HepG2 (cell line): ENCODE measurements at regions of chr14 and their contacts with region 1.

Region 1: DNA sequence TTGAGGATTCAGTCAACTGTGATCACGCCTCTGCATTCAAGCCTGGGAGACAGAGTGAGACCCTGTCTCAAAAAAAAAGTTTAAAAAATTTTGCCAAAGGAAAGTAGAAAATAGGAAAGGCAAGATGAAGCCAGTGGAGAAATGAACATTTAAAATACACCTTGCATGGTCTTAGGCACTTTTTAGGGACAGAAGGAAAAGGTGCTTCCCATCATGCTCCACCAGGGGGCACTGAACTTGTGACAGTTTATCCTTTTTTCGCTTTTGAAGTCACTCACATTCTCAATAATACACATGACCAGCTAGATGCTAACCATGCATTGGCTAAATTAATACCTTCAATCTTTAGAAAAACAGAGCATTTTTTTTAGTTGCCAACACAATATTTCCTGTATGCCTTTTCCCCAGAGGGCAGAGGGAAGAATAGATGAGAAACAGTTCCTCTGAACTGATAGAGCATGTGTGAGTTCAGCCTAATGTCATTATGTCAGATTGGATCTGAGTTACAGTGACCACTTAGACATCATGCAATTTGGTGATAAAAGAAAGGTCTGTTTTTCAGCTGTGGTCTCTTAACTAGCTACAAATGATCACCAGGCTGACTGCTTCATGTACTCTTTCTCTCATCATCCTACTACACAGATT is 221.8 kb upstream of the SSTR1 start:
- DNase-seq: peak; percentile 77
- ATAC-seq: peak; percentile 93
- H3K4me3 ChIP-seq: no peak overlapping the region
- H3K27ac ChIP-seq: no peak overlapping the region
- H3K4me1 ChIP-seq: no peaks in the 10 kb centered on the region
- H3K27me3 ChIP-seq: no peaks in the 10 kb centered on the region; a peak in 1 of 5 replicates
- CTCF ChIP-seq: peak; percentile 89
- EP300 ChIP-seq: no peak
- POLR2A ChIP-seq: no peak
- RAD21 ChIP-seq: no peak

Region 2: DNA sequence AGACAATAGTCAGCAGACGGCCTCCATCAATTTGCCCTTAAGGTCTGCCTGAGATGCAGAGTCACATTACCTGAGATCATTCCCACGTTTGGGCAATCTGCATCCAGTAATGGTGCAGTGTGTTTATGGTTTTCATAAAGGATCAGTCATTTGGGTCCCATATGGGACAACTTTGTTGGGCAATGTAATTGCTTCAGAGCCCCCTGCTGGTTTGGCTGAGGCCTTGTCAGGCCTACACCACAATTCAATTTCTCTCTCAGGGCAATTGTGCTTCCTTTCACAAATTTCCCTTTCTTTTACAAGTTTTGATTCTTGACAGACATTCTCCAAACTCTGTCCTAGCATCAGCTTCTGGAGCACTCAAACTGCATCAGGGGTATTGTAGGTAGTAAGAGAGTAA is 30.5 kb after region 1 on chr14:
- CTCF ChIA-PET with region 1: no interaction called
- POLR2A ChIA-PET with region 1: no interaction called
- in situ Hi-C with region 1: no loop called
- intact Hi-C with region 1: loop called (anchors 2 kb)
- DNase-seq: peak; percentile 41
- ATAC-seq: peak; percentile 95
- H3K4me3 ChIP-seq: no peak overlapping the region
- H3K27ac ChIP-seq: no peak overlapping the region
- H3K4me1 ChIP-seq: no peaks in the 10 kb centered on the region
- H3K27me3 ChIP-seq: no peaks in the 10 kb centered on the region
- CTCF ChIP-seq: peak; percentile 55
- EP300 ChIP-seq: no peak
- POLR2A ChIP-seq: no peak
- RAD21 ChIP-seq: no peak

Region 3: GRCh38 chr14:38065106-38065762 is 79.3 kb after region 1 on chr14:
- CTCF ChIA-PET with region 1: no interaction called
- POLR2A ChIA-PET with region 1: no interaction called
- in situ Hi-C with region 1: no loop called
- intact Hi-C with region 1: no loop called
- DNase-seq: no peak
- ATAC-seq: peak; percentile 77
- H3K4me3 ChIP-seq: no peak overlapping the region
- H3K27ac ChIP-seq: no peak overlapping the region
- H3K4me1 ChIP-seq: no peaks in the 10 kb centered on the region
- H3K27me3 ChIP-seq: no peaks in the 10 kb centered on the region
- CTCF ChIP-seq: no peak
- EP300 ChIP-seq: no peak
- POLR2A ChIP-seq: no peak
- RAD21 ChIP-seq: no peak

Region 4: GRCh38 chr14:38197001-38197783 is 211.2 kb after region 1 on chr14:
- CTCF ChIA-PET with region 1: interaction called, 8 read pairs
- POLR2A ChIA-PET with region 1: no interaction called
- in situ Hi-C with region 1: no loop called
- intact Hi-C with region 1: loop called (anchors 1 kb)
- DNase-seq: no peak
- ATAC-seq: peak; percentile 57; the same call in 2 of the 3 replicates
- H3K4me3 ChIP-seq: no peak overlapping the region
- H3K27ac ChIP-seq: no peak overlapping the region
- H3K4me1 ChIP-seq: no peaks in the 10 kb centered on the region
- H3K27me3 ChIP-seq: no peaks in the 10 kb centered on the region; a peak in 1 of 5 replicates
- CTCF ChIP-seq: peak; percentile 29; the same call in 1 of the 2 replicates
- EP300 ChIP-seq: no peak
- POLR2A ChIP-seq: no peak
- RAD21 ChIP-seq: no peak

Region 5: GRCh38 chr14:38391334-38391733 is 405.4 kb after region 1 on chr14:
- CTCF ChIA-PET with region 1: no interaction called
- POLR2A ChIA-PET with region 1: no interaction called
- in situ Hi-C with region 1: no loop called
- intact Hi-C with region 1: no loop called
- DNase-seq: no peak
- ATAC-seq: no peak
- H3K4me3 ChIP-seq: no peak overlapping the region
- H3K27ac ChIP-seq: no peak overlapping the region
- H3K4me1 ChIP-seq: no peaks in the 10 kb centered on the region
- H3K27me3 ChIP-seq: no peaks in the 10 kb centered on the region
- CTCF ChIP-seq: no peak
- EP300 ChIP-seq: no peak
- POLR2A ChIP-seq: no peak
- RAD21 ChIP-seq: no peak